Psoas muscle (tissue), 8 donors: ENCODE measurements at regions of chr6 and their contacts with region 1.

Region 1: GRCh38 chr6:116279260-116280063 is at the start of gene TSPYL1:
- DNase-seq: peak; percentile 94 to 97
- ATAC-seq: peak; percentile 98 to 99 (median 98)
- H3K4me3 ChIP-seq: peak within 1 kb of the TSS; percentile 91
- H3K27ac ChIP-seq: peak within 1 kb of the TSS; percentile 96
- H3K4me1 ChIP-seq: peaks cover 58% of the 10 kb centered on the region
- H3K27me3 ChIP-seq: no peaks in the 10 kb centered on the region
- CTCF ChIP-seq: no peak
- total RNA-seq, gene TSPYL1: 96.3 to 174 (median 130) TPM

Region 2: GRCh38 chr6:116027801-116028200 is 251.7 kb before region 1 on chr6:
- intact Hi-C with region 1: no loop called
- DNase-seq: no peak
- ATAC-seq: no peak
- H3K4me3 ChIP-seq: no peak overlapping the region
- H3K27ac ChIP-seq: no peak overlapping the region
- H3K4me1 ChIP-seq: no peaks in the 10 kb centered on the region
- H3K27me3 ChIP-seq: no peaks in the 10 kb centered on the region
- CTCF ChIP-seq: no peak

Region 3: DNA sequence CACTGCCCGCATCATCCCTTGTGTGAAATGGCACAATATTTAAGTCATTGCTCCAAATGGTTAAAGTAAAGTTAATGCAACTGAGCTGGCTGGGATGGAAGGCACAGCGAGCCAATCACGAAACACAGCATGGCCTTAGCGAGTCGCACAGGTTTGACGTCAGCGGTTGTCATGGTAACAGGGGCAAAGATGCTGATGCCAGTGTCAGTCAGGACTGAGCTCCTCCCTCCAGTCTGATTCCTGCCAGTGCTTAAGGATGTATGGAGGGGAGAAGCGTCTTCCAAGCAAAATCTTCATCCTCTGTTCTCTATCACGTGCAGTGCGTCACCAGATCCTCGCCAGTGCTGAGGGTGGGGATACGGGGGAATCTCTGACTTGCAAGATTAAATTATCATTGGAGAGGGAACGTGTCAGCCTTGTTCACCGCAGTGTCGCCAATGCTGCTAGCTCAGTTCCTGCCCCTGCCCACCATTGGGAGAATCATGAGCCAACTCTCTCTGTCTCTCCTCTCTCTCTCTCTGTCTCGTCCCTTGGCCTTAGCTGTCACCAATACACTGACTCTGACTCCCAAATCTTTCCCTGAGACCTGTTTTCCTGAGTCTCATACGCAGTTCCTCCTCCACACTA is 50.1 kb before region 1 on chr6:
- intact Hi-C with region 1: no loop called
- DNase-seq: peak; percentile 80 to 81
- ATAC-seq: peak in 3 of 4 donors; percentile 46 to 69 (median 65)
- H3K4me3 ChIP-seq: no peak overlapping the region
- H3K27ac ChIP-seq: no peak overlapping the region
- H3K4me1 ChIP-seq: no peaks in the 10 kb centered on the region
- H3K27me3 ChIP-seq: no peaks in the 10 kb centered on the region
- CTCF ChIP-seq: no peak

Region 4: DNA sequence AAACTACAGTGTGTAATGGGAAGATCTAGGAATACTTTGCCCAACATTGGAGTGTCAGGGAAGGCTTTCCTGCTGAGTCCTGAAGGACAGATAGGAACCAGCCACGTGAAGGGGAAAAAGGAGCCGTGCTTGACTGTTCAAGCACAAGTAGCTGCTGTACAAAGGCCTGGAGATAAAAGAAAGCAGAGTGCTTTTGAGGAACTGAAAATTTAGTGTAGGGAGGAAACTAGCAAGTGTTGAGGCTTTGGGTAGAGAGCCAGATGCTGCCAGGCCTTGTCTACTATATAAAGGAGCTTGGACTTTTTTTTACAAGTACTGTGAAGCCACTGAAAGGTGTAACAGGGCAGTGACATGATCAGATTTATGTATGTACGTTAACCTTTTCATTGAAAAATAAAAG is 130.3 kb after region 1 on chr6:
- intact Hi-C with region 1: loop called in 1 of 2 experiments (anchors 10 kb)
- DNase-seq: no peak
- ATAC-seq: no peak
- H3K4me3 ChIP-seq: no peak overlapping the region
- H3K27ac ChIP-seq: peak overlapping the region; percentile 86
- H3K4me1 ChIP-seq: peaks cover 68% of the 10 kb centered on the region
- H3K27me3 ChIP-seq: no peaks in the 10 kb centered on the region
- CTCF ChIP-seq: no peak

Region 5: DNA sequence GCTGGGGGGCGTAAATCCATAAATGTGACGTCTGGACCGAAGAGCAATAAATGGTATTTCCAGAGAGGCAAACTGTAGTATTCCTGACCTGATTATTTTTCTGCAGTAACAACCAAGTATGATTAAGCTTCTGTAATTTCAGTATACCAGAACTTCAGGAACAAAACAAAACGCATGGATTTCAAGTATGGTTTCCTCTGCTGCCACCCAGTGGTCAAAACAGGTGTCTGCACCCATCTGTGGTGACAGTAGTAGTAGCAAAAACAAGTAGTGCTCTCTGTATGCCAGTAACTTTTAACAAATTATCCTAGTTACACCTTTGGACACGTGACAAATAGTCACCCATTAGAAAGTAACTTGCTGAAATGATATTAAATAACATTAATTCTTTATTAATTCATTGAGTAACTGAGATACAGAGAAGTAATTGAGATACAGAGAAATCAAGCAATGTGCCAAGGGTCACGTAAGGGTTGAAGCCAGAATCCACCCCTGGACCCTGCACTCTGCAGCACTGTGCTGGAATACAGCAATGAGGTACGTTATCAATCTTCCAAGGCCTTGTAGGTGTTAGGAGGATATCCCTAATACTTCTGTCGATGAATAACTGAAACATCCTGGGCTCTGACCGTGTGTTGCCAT is 282.0 kb after region 1 on chr6:
- intact Hi-C with region 1: loop called in 1 of 2 experiments (anchors 2 kb)
- DNase-seq: peak; percentile 67 to 80
- ATAC-seq: peak; percentile 40 to 80 (median 65)
- H3K4me3 ChIP-seq: peak overlapping the region; percentile 53
- H3K27ac ChIP-seq: no peak overlapping the region
- H3K4me1 ChIP-seq: peaks cover 9% of the 10 kb centered on the region
- H3K27me3 ChIP-seq: no peaks in the 10 kb centered on the region
- CTCF ChIP-seq: peak; percentile 96

Region 6: GRCh38 chr6:116570856-116571682 is 291.6 kb after region 1 on chr6 and contains the start of gene RWDD1:
- intact Hi-C with region 1: loop called in 1 of 2 experiments (anchors 2 kb)
- DNase-seq: peak; percentile 100
- ATAC-seq: peak; percentile 94 to 98 (median 97)
- H3K4me3 ChIP-seq: peak within 1 kb of the TSS; percentile 87
- H3K27ac ChIP-seq: peak within 1 kb of the TSS; percentile 90
- H3K4me1 ChIP-seq: peaks cover 28% of the 10 kb centered on the region
- H3K27me3 ChIP-seq: no peaks in the 10 kb centered on the region
- CTCF ChIP-seq: no peak
- total RNA-seq, gene RWDD1: 49.5 to 71.4 (median 69.3) TPM

Region 7: GRCh38 chr6:116596815-116597214 is 317.4 kb after region 1 on chr6:
- intact Hi-C with region 1: no loop called
- DNase-seq: no peak
- ATAC-seq: no peak
- H3K4me3 ChIP-seq: no peak overlapping the region
- H3K27ac ChIP-seq: no peak overlapping the region
- H3K4me1 ChIP-seq: no peaks in the 10 kb centered on the region
- H3K27me3 ChIP-seq: no peaks in the 10 kb centered on the region
- CTCF ChIP-seq: no peak